Kidney (tissue), 22 donors: ENCODE measurements at regions of chr3 and their contacts with region 1.

Region 1: GRCh38 chr3:141303481-141304223 is 64.7 kb upstream of the ZBTB38 start:
- DNase-seq: peak in 4 of 5 donors; percentile 61 to 90 (median 80)
- H3K4me3 ChIP-seq: no peak overlapping the region
- H3K27ac ChIP-seq: no peak overlapping the region
- H3K4me1 ChIP-seq: peaks cover 0 to under 1% (median 0%) of the 10 kb centered on the region in 3 donors
- H3K27me3 ChIP-seq: no peaks in the 10 kb centered on the region
- CTCF ChIP-seq: peak; percentile 78

Region 2: DNA sequence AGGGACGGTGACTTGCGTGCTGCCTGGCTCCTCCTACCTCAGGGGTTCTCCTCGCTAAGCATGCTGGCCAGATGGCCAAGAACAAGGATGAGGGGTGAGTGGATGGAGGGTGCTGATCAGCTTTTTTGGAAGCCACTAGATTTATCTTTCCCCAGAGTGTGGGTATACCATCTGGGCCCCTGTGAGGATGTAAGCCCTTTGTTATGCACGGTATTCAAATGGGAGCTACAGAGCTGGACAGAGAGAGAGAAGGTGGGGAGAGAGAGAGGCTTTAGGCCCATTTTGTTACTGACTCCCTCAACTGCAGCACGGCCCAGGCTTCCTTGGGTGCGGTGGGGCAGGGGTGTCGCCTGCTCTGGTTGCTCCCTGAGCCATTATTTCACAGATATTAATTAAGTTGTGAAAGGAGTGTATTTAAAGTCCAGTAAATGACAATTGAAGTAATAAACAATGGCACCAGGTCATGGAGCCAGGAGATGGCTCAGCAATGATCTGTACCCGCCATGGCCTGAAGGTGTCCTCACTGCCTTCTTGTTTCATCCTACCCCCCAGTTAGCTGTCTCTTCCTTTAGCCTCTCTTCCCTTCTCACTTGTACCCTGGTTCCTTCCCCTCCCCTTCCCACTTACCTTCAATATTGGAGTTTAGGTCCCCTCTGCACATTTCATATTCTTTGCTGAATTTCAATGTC is 1210.7 kb before region 1 on chr3:
- intact Hi-C with region 1: no loop called
- DNase-seq: no peak
- H3K4me3 ChIP-seq: no peak overlapping the region
- H3K27ac ChIP-seq: no peak overlapping the region
- H3K4me1 ChIP-seq: peaks cover 0 to 5% (median 2%) of the 10 kb centered on the region in 3 donors
- H3K27me3 ChIP-seq: no peaks in the 10 kb centered on the region
- CTCF ChIP-seq: no peak

Region 3: GRCh38 chr3:141201122-141201521 is 102.5 kb before region 1 on chr3:
- intact Hi-C with region 1: no loop called
- DNase-seq: no peak
- H3K4me3 ChIP-seq: no peak overlapping the region
- H3K27ac ChIP-seq: no peak overlapping the region
- H3K4me1 ChIP-seq: no peaks in the 10 kb centered on the region
- H3K27me3 ChIP-seq: no peaks in the 10 kb centered on the region
- CTCF ChIP-seq: no peak

Region 4: DNA sequence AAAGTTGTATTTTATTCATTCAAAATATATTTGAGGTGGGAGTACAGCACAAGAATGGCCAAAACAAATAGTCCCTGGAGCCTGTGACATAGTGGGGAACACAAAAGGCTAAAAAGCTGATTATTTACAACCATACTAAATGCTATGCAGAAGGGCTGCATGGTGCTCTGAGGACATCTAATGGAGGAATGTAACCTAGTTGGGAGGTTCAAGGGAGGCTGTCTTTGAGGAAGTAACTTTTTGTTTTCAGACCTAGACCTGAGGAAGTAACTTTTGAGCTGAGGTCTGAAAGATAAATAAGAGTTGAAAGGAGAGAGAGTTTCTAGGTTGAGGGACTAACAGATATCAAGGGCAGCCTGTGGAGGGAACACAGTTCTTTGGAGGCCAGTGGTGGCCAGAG is 148.4 kb after region 1 on chr3:
- intact Hi-C with region 1: loop called (anchors 10 kb)
- DNase-seq: peak in 2 of 5 donors; percentile 73 to 88
- H3K4me3 ChIP-seq: no peak overlapping the region
- H3K27ac ChIP-seq: no peak overlapping the region
- H3K4me1 ChIP-seq: peaks cover 0 to 2% (median 0%) of the 10 kb centered on the region in 3 donors
- H3K27me3 ChIP-seq: no peaks in the 10 kb centered on the region
- CTCF ChIP-seq: peak; percentile 76

Region 5: GRCh38 chr3:141575879-141576743 is 272.5 kb after region 1 on chr3:
- intact Hi-C with region 1: no loop called
- DNase-seq: peak in 3 of 5 donors; percentile 15 to 32 (median 22)
- H3K4me3 ChIP-seq: no peak overlapping the region
- H3K27ac ChIP-seq: no peak overlapping the region
- H3K4me1 ChIP-seq: no peaks in the 10 kb centered on the region
- H3K27me3 ChIP-seq: no peaks in the 10 kb centered on the region
- CTCF ChIP-seq: peak; percentile 24